Activated CD4-positive, alpha-beta memory T cell treated with anti-CD3 and anti-CD28 coated beads, Interleukin-2, amount 10 ng/mL, durations not matched to agents 7 days and 5 days (primary cell): ENCODE measurements at regions of chr18 and their contacts with region 1.

Region 1: DNA sequence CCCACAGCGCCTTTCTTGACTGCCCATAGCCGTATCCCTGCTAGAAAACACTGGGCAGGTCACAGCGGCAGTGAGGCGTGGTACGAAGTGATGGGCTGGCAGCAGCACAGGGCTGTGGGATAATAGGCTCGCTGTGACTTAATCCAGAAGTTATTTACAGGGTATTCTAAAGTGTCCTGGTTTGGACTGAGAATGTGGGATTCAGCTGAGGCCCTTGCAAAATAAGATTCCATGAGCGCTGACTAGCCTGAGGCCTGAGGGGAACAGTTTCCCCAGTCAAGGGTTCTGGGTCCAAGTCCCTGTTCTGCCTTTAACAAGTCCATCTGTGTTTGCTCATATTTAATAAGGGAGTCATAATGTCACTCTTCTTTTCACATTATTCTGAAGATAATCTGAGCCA is 34.6 kb downstream of the SETBP1 start:
- DNase-seq: no peak
- H3K4me3 Mint-ChIP-seq: no peak overlapping the region
- H3K27ac Mint-ChIP-seq: no peak overlapping the region
- H3K4me1 Mint-ChIP-seq: peaks cover 79% of the 10 kb centered on the region
- H3K27me3 Mint-ChIP-seq: peaks cover 10% of the 10 kb centered on the region

Region 2: DNA sequence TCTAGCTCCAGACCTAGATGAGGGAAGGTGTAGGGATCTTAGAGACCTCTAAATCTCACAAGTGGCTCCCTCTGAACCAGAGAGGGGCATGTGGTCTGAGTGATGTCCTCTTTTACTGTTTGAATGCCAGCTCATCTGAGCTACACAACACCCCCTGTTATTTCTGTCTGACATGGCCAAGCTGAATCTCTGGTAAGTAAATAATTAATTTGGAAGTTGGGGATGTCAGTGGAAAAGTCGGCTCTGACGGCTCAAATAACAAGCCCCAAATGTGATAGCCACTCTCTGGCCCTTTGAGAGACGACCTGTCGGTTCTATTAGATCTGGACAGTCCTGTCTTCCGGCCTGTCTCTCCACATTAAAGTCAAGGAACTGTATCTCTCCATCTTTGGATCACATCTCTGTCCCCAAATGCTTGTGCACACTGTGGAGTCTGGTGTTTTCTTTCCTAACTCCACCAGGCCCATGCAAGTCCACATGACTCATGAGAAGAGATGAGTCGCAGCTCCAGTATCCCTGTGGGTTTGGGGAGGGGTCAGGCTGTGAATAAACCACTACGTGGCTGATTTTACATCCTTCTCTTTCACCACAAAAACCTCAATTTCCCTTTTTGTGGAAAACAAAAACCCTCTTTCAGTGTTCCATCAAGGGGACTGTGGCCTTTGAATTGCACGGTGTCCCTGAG is 18.0 kb after region 1 on chr18:
- CTCF ChIA-PET with region 1: interaction called, 3 read pairs
- POLR2A ChIA-PET with region 1: interaction called, 20 read pairs
- DNase-seq: peak; percentile 59
- H3K4me3 Mint-ChIP-seq: no peak overlapping the region
- H3K27ac Mint-ChIP-seq: peak overlapping the region; percentile 8
- H3K4me1 Mint-ChIP-seq: peaks cover 70% of the 10 kb centered on the region
- H3K27me3 Mint-ChIP-seq: peaks cover 27% of the 10 kb centered on the region